ENCODE measurements at regions of chr17 and their contacts with region 1.

Region 1: DNA sequence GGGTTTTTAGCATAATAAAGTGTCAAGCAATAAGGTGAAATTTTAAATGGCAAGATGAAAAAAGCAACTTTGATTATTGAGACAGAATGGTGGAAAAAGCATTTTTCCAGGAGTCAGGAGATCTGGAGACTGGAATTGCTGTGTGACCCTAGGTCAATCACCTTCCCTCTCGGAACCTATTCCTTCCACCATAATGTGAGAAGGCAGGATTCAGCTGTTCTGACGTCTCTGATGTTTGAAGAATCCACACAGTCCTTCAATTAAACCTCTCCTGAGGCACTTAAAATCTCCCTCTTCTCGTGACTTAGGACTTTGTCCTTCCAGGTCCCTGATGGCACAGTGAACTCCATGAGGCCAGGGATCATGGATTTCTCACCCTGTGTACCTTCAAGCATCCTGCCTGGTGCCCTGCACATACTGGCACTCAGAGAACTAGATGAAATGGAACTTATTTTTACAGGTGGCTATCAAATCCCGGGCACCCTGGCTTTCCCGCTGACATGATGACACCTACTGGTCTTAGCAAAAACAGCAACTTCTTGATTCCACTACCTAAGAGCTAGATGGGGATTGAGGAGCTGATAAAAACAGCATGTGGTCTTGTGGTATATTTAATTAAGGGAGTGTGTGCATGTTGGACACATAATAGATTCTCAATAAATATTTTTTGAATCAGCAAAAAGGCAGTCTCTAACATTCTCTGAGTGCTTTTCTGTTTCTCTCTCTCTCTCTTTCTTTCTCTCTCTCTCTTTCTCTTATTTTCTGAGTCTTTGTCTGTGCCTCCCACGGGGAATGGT is 2.3 kb upstream of the CCDC182 start:
- DNase-seq: peak in 6 of 10 donors; percentile 11 to 59 (median 52)
- H3K4me3 ChIP-seq: no peak overlapping the region
- H3K27ac ChIP-seq: no peak overlapping the region
- H3K27me3 ChIP-seq: no peaks in the 10 kb centered on the region
- CTCF ChIP-seq: peak; percentile 43 to 90 (median 75)

Region 2: GRCh38 chr17:57243171-57243948 is 504.1 kb before region 1 on chr17:
- intact Hi-C with region 1: loop called (anchors 10 kb)
- DNase-seq: peak in 6 of 10 donors; percentile 23 to 64 (median 48)
- H3K4me3 ChIP-seq: no peak overlapping the region
- H3K27ac ChIP-seq: no peak overlapping the region
- H3K27me3 ChIP-seq: no peaks in the 10 kb centered on the region
- CTCF ChIP-seq: peak; percentile 60 to 99 (median 94)

Region 3: GRCh38 chr17:57597531-57598453 is 149.6 kb before region 1 on chr17:
- intact Hi-C with region 1: loop called in 1 of 2 experiments (anchors 5 kb)
- DNase-seq: peak in 9 of 10 donors; percentile 47 to 86 (median 76)
- H3K4me3 ChIP-seq: no peak overlapping the region
- H3K27ac ChIP-seq: peak overlapping the region in 44 of 59 donors; percentile 0 to 82 (median 48)
- H3K27me3 ChIP-seq: no peaks in the 10 kb centered on the region
- CTCF ChIP-seq: peak; percentile 74 to 97 (median 89)

Region 4: GRCh38 chr17:57772774-57773173 is 25.4 kb after region 1 on chr17:
- intact Hi-C with region 1: no loop called
- DNase-seq: no peak
- H3K4me3 ChIP-seq: no peak overlapping the region
- H3K27ac ChIP-seq: no peak overlapping the region
- H3K27me3 ChIP-seq: no peaks in the 10 kb centered on the region
- CTCF ChIP-seq: no peak

Region 5: DNA sequence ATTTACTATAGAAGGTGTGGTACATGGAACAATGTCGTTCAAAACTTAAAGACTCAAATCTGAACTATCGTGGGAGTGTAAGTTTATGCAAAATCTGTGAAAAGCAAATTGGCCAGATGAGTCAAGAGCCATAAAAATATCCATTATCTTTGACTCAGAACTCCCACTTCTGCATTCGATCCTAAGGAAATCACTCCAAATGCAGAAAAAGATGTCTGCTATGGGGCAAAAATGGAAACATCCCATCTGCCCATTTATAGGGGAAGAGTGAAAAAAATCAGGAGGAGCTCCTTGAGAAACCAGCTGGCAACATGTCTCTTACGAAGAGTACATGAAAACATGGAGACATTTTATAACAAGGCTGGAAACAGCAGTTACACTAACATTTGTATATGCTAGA is 41.3 kb after region 1 on chr17:
- intact Hi-C with region 1: no loop called
- DNase-seq: no peak
- H3K4me3 ChIP-seq: no peak overlapping the region
- H3K27ac ChIP-seq: no peak overlapping the region
- H3K27me3 ChIP-seq: peaks cover 0 to 4% (median 0%) of the 10 kb centered on the region in 45 donors
- CTCF ChIP-seq: no peak

Measured in dorsolateral prefrontal cortex (tissue), 120 donors.